HAP-1 (cell line): ENCODE measurements at regions of chr7 and their contacts with region 1.

Region 1: DNA sequence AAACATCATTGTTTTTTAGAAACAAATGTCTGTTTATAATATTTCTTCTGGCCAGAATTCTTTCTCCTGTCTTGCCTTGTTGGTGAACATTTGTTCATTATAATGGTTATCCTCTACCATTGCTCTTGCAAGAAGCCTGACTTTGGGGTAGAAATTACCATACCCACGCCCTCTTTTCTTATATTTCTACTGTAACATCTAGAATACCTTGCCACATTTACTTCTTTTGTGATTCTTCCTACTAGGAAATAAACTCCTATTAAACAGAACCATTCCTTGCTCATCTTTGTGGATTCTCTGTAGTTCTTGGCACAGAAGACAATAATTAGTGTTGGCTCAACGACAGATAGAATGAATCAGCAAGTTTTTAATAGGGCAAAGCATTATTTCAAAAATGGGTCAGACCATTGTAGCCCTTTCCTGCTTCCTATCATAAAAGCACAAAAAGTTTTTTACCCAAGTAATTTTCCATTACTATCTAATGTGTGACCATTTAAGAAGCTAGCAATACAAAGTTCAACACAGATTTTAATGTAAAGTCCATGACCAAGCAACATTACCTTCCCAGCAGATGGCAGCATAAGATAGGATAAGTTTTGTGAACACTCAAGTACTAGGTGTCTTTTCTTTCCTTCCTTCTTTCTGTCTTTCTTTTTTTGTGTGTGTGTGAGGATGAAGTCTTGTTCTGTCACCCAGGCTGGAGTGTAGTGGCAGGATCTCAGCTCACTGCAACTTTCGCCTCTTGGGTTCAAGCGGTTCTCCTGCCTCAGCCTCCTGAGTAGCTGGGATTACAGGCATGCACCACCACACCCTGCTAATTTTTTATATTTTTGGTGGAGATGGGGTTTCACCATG is 270.4 kb downstream of the HGF start:
- DNase-seq: peak; percentile 38 to 69
- H3K4me3 ChIP-seq: no peak overlapping the region
- H3K4me1 ChIP-seq: no peaks in the 10 kb centered on the region
- H3K27me3 ChIP-seq: no peaks in the 10 kb centered on the region

Region 2: DNA sequence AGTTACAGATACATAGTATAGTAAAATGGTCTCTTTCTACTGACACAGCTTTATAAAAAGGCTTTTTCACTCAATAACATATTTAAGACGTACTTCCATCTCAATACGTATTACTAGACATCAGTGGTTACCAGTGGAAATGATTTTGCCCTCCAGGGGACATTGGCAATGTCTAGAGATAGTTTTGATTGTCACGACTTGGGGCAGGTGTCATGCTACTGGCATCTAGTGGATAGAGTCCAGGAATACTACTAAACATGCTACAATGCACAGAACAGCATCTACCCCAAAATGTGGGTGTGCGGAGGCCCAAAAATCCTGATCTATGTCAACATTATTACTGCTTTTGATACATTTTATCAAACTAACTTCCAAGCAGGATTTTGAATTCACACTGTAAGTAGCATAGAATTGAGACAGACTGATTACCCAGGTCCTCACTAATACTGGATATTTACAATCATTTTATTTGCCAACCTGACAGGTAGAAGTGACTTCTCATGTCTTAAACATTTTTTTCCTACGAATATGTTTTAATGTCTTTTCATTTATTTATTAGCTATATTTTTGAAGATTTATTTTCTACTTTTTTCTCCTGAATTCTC is 216.6 kb after region 1 on chr7:
- in situ Hi-C with region 1: loop called (anchors 25 kb)
- DNase-seq: peak; percentile 15 to 27
- H3K4me3 ChIP-seq: no peak overlapping the region
- H3K4me1 ChIP-seq: no peaks in the 10 kb centered on the region
- H3K27me3 ChIP-seq: no peaks in the 10 kb centered on the region

Region 3: DNA sequence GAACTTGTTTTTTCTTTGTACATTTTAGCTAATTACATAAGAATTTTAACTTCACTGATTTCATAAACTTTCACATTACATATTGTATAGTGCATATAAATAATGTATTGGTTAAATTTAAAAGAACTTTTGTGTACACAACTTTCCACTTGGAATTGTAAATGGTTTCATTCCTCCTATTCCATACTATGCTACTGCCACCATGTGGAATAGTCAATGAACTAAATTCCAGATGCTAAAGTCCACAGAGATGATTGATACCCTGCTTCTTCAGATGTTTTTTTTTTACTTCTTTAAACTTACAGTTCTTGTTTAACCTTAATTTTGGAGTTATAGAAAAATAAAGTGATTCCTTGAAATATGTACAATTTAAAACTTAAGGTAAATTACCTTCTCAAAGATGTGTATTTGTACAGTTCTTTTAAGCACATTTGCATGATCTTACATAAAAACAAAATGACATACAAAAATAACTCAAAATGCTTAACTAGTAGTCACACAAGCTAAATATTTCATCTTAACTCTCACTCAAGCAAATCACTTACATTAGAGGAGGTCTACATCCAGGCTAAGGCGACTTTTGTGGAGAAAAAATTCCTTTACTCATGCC is 518.0 kb after region 1 on chr7:
- in situ Hi-C with region 1: loop called (anchors 25 kb)
- DNase-seq: peak in 1 of 2 experiments; percentile 51
- H3K4me3 ChIP-seq: no peak overlapping the region
- H3K4me1 ChIP-seq: no peaks in the 10 kb centered on the region
- H3K27me3 ChIP-seq: no peaks in the 10 kb centered on the region

Region 4: DNA sequence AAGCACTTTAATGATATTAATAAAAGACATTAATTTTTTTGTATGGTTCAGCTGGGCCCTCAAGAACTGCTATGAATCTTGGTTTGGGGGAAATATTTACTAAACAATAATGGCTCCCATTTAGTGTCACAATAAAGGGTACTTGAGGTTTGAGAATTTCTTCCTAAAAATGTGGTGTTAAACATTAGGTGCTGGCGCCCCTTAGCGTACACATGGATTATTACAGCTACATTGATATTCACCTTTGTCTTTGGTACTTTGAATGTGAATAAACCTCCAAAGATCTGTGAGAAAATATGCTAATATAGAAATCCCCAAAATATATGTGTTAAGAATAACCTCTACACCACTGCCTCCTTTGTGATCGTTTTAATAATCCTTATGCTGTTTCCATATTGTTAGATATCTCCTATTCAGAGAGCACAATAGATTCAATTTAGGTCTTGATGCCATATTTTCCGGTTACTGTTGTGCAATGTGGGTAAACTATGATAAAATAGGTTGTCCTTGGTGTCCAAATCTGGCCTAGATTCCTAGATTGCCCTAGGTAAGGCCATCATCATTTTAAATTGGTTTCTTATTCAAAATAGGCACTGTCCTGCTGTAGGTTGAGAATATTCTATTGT is 1105.9 kb after region 1 on chr7:
- in situ Hi-C with region 1: loop called (anchors 25 kb)
- DNase-seq: peak; percentile 60 to 64
- H3K4me3 ChIP-seq: no peak overlapping the region
- H3K4me1 ChIP-seq: peaks cover 8% of the 10 kb centered on the region
- H3K27me3 ChIP-seq: no peaks in the 10 kb centered on the region

Region 5: GRCh38 chr7:82740246-82740848 is 1240.9 kb after region 1 on chr7:
- in situ Hi-C with region 1: loop called (anchors 25 kb)
- DNase-seq: peak; percentile 41 to 79
- H3K4me3 ChIP-seq: no peak overlapping the region
- H3K4me1 ChIP-seq: no peaks in the 10 kb centered on the region
- H3K27me3 ChIP-seq: no peaks in the 10 kb centered on the region